ENCODE measurements at regions of chr2 and their contacts with region 1.

Region 1: GRCh38 chr2:41414486-41415230 is 633.2 kb upstream of the PKDCC start:
- H3K4me3 Mint-ChIP-seq: no peak overlapping the region
- H3K27ac Mint-ChIP-seq: no peak overlapping the region
- H3K4me1 Mint-ChIP-seq: no peaks in the 10 kb centered on the region
- H3K27me3 Mint-ChIP-seq: no peaks in the 10 kb centered on the region

Region 2: DNA sequence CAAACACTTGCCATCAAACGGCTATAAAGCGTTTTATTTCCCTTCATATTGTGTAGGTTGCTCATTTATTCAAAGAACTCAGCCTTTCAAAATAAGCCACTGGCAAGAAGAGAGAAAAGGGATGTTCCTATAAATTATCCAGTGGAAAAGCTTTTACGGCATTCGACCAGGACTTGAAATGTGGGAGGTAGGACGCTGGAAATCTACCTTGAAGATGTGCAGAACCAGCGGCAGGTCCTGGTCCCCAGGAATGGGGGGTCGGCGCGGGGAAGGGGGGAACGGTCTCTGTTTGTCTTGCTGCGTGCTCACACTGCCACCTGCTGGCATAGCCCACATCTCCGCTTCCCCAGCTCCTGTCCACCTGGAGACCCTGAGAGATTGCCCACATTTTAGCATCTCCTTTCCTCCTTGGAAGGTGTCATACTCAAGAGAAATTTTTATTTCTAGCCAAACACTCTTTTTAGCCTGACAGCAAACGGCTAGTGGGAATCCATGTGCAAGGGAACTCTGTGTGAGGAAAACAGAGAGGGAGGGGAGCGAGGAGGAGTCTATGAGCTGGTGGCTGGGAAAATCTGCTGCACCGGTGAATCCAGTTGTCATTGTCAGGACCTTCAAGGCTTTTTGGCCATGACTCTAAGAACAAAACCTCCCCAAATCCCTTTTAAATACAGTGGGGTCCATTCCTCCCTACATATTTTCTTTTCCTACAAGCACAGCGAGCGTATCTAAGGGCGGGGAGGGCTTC is 284.2 kb after region 1 on chr2:
- intact Hi-C with region 1: loop called (anchors 1 kb)
- H3K4me3 Mint-ChIP-seq: no peak overlapping the region
- H3K27ac Mint-ChIP-seq: no peak overlapping the region
- H3K4me1 Mint-ChIP-seq: no peaks in the 10 kb centered on the region
- H3K27me3 Mint-ChIP-seq: peaks cover 4% of the 10 kb centered on the region

Region 3: GRCh38 chr2:41782306-41783158 is 367.9 kb after region 1 on chr2:
- intact Hi-C with region 1: loop called (anchors 1 kb)
- H3K4me3 Mint-ChIP-seq: no peak overlapping the region
- H3K27ac Mint-ChIP-seq: no peak overlapping the region
- H3K4me1 Mint-ChIP-seq: no peaks in the 10 kb centered on the region
- H3K27me3 Mint-ChIP-seq: peaks cover 6% of the 10 kb centered on the region

Measured in dendritic cell treated with granulocyte-macrophage colony-stimulating factor and Interleukin-4, amounts not matched to agents 40 ng/mL and 50 ng/mL, for 4 days (primary cell).